Activated naive CD8-positive, alpha-beta T cell treated with anti-CD3 and anti-CD28 coated beads, Interleukin-2, amount 10 ng/mL, durations not matched to agents 7 days and 5 days (primary cell): ENCODE measurements at regions of chr17 and their contacts with region 1.

Region 1: DNA sequence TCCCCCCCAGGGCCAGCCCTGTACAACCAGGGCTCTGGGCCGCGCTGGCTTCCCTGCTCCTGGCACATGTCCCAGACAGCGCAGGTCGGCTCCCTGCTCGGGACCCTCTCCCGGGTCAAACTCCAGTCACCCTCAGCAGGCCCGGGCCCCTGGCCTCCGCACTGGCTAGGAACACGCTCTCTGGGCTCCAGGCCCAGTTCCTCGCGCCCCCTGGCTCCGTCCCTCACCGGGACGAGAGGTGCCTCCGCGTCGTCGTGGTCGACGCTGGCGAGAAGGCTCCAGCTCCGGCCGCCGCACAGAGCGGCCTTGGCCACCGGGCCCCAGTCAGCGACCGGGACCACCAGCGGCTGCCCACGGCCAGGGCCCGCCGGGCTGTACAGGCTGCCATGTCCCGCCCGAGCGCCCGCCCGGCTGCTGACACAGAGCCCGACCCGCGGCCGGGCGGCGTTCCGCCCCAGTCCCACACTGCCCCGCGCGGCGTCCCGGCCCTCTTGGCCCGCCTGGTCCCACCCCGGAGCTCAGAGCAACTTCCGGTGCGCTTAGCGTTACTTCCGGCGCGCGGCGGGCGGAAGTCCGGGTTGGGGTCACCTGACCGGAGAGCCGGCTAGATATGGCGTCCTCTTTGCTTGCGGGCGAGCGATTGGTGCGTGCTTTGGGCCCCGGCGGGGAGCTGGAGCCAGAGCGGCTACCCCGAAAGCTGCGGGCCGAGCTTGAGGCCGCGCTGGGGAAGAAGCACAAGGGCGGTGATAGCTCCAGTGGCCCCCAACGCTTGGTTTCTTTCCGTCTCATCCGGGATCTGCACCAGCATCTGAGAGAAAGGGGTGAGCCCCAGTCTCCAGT is at the start of gene POLDIP2:
- DNase-seq: peak; percentile 97
- ATAC-seq: peak; percentile 99
- H3K4me3 Mint-ChIP-seq: peak within 1 kb of the TSS; percentile 94
- H3K27ac Mint-ChIP-seq: peak within 1 kb of the TSS; percentile 93
- H3K4me1 Mint-ChIP-seq: peaks cover 19% of the 10 kb centered on the region
- H3K27me3 Mint-ChIP-seq: no peaks in the 10 kb centered on the region
- total RNA-seq, gene POLDIP2: 51.5 to 54.5 TPM

Region 2: GRCh38 chr17:28318759-28319660 is 38.3 kb before region 1 on chr17 and contains the start of gene TMEM97:
- POLR2A ChIA-PET with region 1: interaction called, 19 read pairs
- DNase-seq: peak; percentile 95
- ATAC-seq: peak; percentile 99
- H3K4me3 Mint-ChIP-seq: peak within 1 kb of the TSS; percentile 84
- H3K27ac Mint-ChIP-seq: peak within 1 kb of the TSS; percentile 86
- H3K4me1 Mint-ChIP-seq: peaks cover 32% of the 10 kb centered on the region
- H3K27me3 Mint-ChIP-seq: no peaks in the 10 kb centered on the region
- total RNA-seq, gene TMEM97: 18.8 to 20.9 TPM

Region 3: DNA sequence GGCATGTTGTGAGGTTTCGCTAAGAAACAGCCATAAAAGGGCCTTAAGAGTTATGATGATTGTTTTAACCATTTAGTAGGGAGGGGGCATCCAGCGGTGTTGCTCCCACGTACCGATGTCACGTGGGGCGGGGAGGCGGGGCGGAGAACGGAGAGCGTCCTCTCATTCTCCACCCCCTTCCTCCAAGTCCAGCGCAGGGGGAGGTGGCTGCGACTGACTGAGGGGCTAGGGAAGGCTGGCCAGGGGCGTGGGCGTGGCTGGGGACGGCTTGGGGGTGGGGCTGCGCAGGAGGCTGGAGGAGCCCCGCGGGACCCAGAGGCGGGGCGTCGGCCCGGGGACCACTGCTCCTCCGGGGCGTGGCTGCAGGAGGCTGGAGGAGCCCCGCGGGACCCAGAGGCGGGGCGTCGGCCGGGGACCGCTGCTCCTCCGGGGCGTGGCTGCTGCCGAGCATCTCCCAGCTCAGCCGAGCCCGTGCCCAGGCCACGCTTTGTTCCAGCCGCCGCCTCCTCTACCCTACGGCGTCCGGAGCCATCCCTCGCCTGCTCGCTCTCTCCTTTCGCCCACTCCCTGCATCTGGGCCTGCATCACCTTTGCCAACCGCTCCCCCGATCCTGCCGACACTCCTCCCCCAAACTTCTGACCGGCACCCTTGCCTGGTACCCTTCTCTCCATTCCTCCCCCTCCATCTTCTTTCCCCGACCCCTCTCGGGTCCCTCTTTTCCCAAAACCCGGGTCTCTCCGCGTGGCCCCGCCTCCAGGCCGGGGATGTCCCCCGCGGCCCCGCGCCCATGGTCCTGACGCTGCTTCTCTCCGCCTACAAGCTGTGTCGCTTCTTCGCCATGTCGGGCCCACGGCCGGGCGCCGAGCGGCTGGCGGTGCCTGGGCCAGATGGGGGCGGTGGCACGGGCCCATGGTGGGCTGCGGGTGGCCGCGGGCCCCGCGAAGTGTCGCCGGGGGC is 14.2 kb after region 1 on chr17 and contains the start of gene SARM1:
- POLR2A ChIA-PET with region 1: interaction called, 16 read pairs
- DNase-seq: peak; percentile 88
- ATAC-seq: peak; percentile 92
- H3K4me3 Mint-ChIP-seq: peak within 1 kb of the TSS; percentile 94
- H3K27ac Mint-ChIP-seq: peak within 1 kb of the TSS; percentile 88
- H3K4me1 Mint-ChIP-seq: peaks cover 18% of the 10 kb centered on the region
- H3K27me3 Mint-ChIP-seq: no peaks in the 10 kb centered on the region
- total RNA-seq, gene SARM1: 25.6 to 25.8 TPM

Region 4: GRCh38 chr17:28384281-28385036 is 27.2 kb after region 1 on chr17:
- POLR2A ChIA-PET with region 1: interaction called, 31 read pairs
- DNase-seq: peak; percentile 76
- ATAC-seq: peak; percentile 95
- H3K4me3 Mint-ChIP-seq: peak overlapping the region; percentile 96
- H3K27ac Mint-ChIP-seq: peak overlapping the region; percentile 92
- H3K4me1 Mint-ChIP-seq: peaks cover 23% of the 10 kb centered on the region
- H3K27me3 Mint-ChIP-seq: no peaks in the 10 kb centered on the region